Ascending aorta (tissue), 2 donors: ENCODE measurements at regions of chr4 and their contacts with region 1.

Region 1: DNA sequence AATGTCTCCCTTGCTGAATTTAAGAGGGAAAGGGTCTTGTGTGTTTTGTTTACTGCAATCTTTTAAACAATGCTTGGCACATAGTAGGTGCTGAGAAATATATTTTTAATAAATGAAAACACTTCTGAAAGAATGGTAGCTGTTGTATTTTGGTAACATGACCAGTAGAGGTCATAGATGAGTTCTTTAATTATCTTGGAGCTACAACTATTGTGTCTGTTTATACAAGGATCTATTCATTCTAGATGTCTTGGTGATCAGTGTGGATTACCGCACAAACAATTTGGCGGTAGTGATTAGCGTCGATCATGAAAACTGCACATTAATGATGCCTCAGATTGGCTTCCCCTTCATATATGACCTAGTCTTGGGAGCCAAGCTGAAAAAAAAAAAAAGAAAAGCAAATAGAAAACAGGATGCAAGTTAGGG is 21.4 kb upstream of the SCRG1 start:
- DNase-seq: no peak
- H3K4me3 ChIP-seq: no peak overlapping the region
- H3K27ac ChIP-seq: no peak overlapping the region
- H3K4me1 ChIP-seq: peaks cover 0 to 7% of the 10 kb centered on the region in 2 donors
- H3K27me3 ChIP-seq: no peaks in the 10 kb centered on the region
- CTCF ChIP-seq: peak in 2 of 3 experiments; percentile 45 to 61

Region 2: GRCh38 chr4:173013232-173013930 is 407.0 kb before region 1 on chr4:
- intact Hi-C with region 1: loop called (anchors 5 kb)
- DNase-seq: peak in 1 of 2 donors; percentile 72
- H3K4me3 ChIP-seq: no peak overlapping the region
- H3K27ac ChIP-seq: no peak overlapping the region
- H3K4me1 ChIP-seq: peaks cover 4 to 5% of the 10 kb centered on the region in 2 donors
- H3K27me3 ChIP-seq: no peaks in the 10 kb centered on the region
- CTCF ChIP-seq: peak; percentile 40 to 89 (median 85)

Region 3: DNA sequence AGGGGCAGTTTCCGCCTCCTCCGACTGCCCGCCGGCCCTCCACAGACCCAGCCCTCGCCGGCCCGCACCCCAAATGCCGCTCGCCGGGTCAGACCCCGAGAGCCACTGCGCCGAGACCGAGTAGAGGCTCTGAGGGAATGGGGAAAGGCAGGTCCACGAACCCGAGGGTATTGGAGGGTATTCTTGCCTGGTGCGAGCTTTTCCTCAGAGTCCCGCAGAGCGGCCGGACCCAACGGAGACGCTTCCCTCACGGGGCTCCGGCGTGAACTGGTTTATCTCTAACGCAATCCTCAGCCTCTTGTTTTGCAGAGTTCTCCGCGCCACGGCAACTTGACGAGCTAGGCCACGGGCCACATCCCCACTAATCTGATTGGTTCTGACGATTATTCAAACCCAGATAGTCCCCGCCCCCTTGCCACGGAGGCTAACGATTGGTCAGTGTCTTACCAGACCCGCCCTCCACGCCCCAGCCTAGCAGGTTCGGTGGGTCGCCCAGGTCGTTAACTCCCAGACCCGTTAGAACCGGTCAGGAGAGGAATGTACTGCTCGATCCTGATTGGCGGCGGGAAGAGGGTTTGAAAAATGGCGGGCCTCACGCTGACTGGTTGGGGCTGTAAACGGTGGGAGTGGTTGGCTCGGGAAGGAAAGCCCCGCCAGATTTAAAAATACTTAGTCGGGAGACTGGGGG is 86.1 kb before region 1 on chr4 and contains the start of gene HMGB2:
- intact Hi-C with region 1: loop called (anchors 2 kb)
- DNase-seq: peak; percentile 100
- H3K4me3 ChIP-seq: peak within 1 kb of the TSS; percentile 97 to 99
- H3K27ac ChIP-seq: peak within 1 kb of the TSS; percentile 93 to 98
- H3K4me1 ChIP-seq: peaks cover 0 to 17% of the 10 kb centered on the region in 2 donors
- H3K27me3 ChIP-seq: no peaks in the 10 kb centered on the region
- CTCF ChIP-seq: no peak
- total RNA-seq, gene HMGB2: 36.1 TPM

Region 4: DNA sequence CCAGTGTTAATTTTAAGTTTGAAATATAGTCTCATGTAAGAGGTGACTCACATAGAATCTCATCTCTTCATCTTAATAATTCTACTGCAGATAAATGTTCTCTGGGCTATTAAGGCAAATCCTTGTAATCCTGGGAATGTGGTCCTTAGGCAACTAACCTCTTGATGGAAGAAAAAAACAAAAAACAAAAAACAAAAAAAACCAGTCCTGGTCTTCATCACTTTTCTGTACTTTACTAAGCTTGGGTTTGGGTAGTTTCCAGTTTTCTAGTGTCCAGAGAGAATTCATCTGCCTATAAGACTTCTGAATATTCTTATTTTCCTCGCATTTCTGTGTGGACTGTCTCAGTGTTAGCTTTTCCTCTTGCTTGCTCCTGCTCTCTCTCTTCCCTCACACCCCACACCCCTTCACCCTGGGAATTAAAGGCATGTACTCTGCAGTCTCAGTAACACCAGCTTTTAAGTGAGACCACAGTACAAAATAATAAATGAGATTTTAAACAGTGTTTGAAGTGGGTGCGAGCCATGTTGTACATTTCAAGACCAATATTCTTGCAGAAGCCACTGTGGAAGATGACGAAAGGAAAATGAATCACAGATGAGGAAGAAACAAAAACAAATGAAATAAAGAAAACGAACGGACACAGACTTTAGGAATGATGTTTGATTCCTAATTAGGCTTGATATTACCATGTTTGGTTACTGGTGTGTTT is 58.0 kb after region 1 on chr4:
- intact Hi-C with region 1: loop called (anchors 5 kb)
- DNase-seq: no peak
- H3K4me3 ChIP-seq: peak overlapping the region in 1 of 2 donors; percentile 35
- H3K27ac ChIP-seq: peak overlapping the region; percentile 69
- H3K4me1 ChIP-seq: peaks cover 0 to 9% of the 10 kb centered on the region in 2 donors
- H3K27me3 ChIP-seq: no peaks in the 10 kb centered on the region
- CTCF ChIP-seq: no peak

Region 5: GRCh38 chr4:173752610-173753230 is 332.4 kb after region 1 on chr4:
- intact Hi-C with region 1: loop called (anchors 5 kb)
- DNase-seq: no peak
- H3K4me3 ChIP-seq: no peak overlapping the region
- H3K27ac ChIP-seq: no peak overlapping the region
- H3K4me1 ChIP-seq: no peaks in the 10 kb centered on the region
- H3K27me3 ChIP-seq: no peaks in the 10 kb centered on the region
- CTCF ChIP-seq: peak in 1 of 3 experiments; percentile 29